PC-3 (cell line): ENCODE measurements at regions of chr4 and their contacts with region 1.

Region 1: DNA sequence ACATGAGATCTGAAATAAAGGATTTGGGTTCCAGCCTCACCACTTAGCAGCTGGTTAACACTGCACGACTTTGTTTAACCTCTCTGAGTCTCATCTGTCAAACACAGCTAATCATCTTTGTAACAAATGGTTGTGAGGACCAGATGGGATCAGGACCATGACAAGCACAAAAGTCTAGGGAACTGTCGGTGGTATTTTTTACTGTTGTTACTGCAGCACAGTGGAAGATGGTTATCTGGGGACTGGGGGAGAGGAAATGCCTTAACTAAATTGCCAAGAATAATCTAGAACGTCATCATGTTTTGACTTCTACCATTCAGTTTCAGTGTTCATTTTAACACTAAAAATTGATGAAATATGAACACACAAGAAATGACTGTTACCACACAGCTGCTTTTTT is 99.5 kb downstream of the ADGRA3 start:
- DNase-seq: no peak
- ATAC-seq: no peak
- H3K4me3 ChIP-seq: no peak overlapping the region
- H3K27ac ChIP-seq: no peak overlapping the region
- H3K4me1 ChIP-seq: peaks cover 9% of the 10 kb centered on the region
- H3K27me3 ChIP-seq: no peaks in the 10 kb centered on the region
- CTCF ChIP-seq: no peak

Region 2: GRCh38 chr4:22500831-22501719 is 84.7 kb after region 1 on chr4:
- CTCF ChIA-PET with region 1: no interaction called
- POLR2A ChIA-PET with region 1: no interaction called
- intact Hi-C with region 1: loop called (anchors 5 kb)
- DNase-seq: peak; percentile 84
- ATAC-seq: peak; percentile 86
- H3K4me3 ChIP-seq: peak overlapping the region; percentile 61
- H3K27ac ChIP-seq: no peak overlapping the region
- H3K4me1 ChIP-seq: peaks cover 22% of the 10 kb centered on the region
- H3K27me3 ChIP-seq: no peaks in the 10 kb centered on the region
- CTCF ChIP-seq: no peak

Region 3: GRCh38 chr4:22607382-22607781 is 191.0 kb after region 1 on chr4:
- CTCF ChIA-PET with region 1: interaction called, 3 read pairs
- POLR2A ChIA-PET with region 1: no interaction called
- intact Hi-C with region 1: loop called (anchors 1 kb)
- DNase-seq: peak; percentile 62
- ATAC-seq: peak; percentile 99
- H3K4me3 ChIP-seq: no peak overlapping the region
- H3K27ac ChIP-seq: no peak overlapping the region
- H3K4me1 ChIP-seq: no peaks in the 10 kb centered on the region
- H3K27me3 ChIP-seq: no peaks in the 10 kb centered on the region
- CTCF ChIP-seq: peak; percentile 62